ENCODE measurements at regions of chr14 and their contacts with region 1.

Region 1: DNA sequence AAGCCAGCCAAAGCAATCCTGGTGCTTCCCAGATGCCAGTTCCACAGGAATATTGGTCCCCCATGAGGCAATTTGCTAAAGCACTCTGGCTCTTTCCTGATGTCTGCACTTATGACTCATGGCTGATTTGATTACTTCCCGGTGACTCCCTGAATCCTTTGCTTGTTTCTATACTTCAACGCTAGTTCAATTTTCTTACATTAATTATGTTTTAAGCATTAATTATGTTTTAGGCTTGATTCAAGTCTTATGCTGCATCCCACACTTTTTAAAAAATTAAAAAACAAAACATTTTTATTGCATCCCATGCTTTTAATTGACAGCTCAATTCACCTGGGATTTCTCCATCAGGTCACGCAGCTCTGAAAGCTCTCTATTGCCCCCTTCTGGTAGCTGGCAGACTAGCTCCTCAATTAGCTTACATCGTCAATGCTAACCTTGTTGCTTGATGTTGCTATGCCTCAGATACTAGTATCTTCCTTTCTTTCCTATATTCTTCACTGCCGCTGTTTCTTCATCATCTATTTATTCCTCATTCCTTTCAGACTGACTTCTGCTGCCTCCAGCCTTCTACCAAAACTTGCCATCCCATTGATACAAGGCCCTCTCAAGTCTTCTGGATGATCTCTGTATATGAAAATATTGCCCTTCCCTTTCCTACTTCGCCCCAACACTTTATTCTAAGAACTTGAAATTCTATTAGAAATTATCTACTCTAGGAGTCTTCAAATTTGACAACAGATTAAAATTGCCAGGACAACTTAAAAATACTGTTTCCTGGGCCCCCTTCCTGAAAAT is 32.0 kb downstream of the TSHR start:
- DNase-seq: peak; percentile 68
- CTCF ChIP-seq: peak; percentile 94

Region 2: DNA sequence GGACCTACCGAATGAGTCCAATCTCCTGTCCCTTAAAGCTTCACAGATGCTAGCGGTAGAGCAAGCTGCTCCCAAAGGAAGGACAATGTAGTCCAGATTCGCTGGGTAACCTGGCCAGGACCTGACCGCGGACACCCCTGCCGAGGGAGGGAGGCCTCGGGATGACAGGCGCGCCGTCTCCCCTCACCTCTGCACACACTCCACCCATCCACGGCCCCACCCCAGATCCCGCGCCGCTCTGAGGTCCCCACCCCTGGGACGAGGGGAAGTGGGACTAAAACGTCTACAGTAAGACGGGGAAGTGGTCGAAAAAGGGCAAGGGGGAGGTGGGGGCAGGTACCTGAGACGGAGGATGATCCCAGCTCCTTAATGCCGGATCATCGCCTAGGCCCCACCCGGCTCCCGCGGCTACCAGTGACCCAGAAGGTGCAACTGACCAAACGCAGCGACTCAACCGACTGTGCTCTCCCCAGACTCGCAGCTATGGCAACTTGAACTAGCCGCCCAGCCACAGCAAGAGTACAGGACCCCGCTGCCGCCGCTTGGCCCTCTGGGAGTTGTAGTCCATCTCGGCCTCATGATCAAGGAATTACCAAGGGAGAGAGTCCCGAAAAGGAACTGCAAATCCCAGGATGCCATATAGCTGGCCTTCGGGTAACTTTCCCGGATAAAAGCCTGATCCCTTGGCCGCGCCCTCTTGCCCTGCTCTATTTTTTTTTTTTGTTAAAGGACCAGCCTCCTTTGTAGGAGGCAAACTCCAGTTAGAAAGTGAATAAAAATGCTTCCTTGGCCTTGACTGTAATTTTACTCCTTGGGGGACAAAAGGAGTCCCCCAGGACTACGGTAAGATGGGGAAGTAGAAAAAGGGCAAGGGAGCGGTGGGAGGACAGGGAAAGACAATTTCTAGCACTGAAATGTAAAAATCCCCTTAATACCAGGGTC is 45.9 kb before region 1 on chr14 and contains the start of gene CEP128:
- CTCF ChIA-PET with region 1: interaction called, 15 read pairs
- POLR2A ChIA-PET with region 1: no interaction called
- DNase-seq: peak; percentile 87
- CTCF ChIP-seq: no peak

Region 3: DNA sequence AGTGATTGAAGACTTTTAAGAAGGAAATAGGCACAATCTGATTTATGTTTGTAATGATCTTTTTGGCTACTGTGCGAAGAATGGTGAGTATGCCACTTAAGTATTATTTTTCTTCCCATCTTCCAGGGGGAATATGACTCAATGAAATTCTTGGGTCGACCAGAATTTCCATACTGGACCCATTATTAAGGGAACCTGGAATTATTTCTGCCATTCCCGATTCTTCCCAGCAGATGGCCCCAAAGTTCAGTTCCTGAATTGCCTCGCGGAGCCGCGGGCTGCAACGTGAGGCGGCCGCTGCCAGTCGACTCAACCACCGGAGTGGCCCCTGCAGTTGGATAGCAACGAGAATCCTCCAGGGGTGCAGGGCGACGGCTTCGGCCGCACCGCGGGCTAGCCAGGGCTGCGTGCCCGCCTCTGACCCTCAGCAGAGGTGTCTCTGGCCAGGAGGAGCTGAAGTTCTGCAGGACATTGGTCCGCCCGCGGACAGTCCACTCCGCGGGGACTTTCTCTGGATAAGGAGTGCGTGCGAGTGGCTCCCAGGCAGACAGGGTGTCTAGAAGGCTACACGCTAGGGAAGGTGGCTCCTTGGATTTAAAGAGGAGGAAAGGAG is 32.6 kb before region 1 on chr14:
- CTCF ChIA-PET with region 1: interaction called, 132 read pairs
- POLR2A ChIA-PET with region 1: no interaction called
- DNase-seq: peak; percentile 76
- CTCF ChIP-seq: peak; percentile 73

Region 4: GRCh38 chr14:80973931-80974641 is 13.3 kb before region 1 on chr14:
- CTCF ChIA-PET with region 1: interaction called, 103 read pairs
- POLR2A ChIA-PET with region 1: no interaction called
- DNase-seq: no peak
- CTCF ChIP-seq: no peak

Region 5: GRCh38 chr14:81062816-81063215 is 75.4 kb after region 1 on chr14:
- CTCF ChIA-PET with region 1: no interaction called
- POLR2A ChIA-PET with region 1: no interaction called
- DNase-seq: no peak
- CTCF ChIP-seq: no peak

Measured in GM10248 (cell line).